AG04449 (cell line): ENCODE measurements at regions of chr3 and their contacts with region 1.

Region 1: DNA sequence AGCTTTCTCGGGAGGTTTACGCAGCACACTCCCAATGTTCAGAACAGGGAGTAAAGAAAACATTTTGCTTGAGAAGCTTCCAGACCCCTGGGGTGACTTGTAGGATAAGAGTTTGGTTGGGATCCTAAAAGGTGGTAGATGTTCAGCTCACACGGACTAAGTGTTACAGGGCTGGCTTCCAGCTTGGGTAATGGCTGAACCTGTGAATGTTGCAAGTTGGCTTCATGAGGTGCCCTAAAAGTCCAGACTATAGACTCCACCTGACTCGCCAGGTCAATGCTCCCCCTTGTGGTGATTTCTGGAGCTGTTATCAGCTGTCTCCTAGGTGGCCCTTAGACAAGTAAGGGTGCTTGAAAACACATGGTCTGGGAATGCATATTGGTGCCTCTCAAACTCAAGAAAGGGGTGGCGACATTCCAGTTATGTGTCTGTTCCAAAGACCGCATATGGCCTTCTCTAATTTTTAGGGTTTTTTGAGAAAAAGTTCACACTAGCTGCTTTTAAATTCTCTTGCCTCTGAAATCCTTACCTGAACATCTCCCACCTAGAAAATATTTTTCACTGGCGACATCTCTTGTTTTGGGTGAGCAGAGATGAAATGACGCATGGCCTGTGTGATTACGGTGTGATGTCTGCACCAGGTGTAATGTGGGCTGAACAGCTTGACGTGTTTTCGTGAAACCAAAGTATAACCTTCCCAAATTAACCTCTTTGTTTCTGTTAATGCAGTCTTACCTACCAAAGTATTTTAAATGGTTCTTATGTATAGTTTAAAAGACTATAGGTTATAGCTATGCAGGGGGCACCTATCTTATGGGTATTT is 175.7 kb upstream of the KBTBD8 start:
- DNase-seq: no peak
- H3K4me3 ChIP-seq: no peak overlapping the region
- CTCF ChIP-seq: peak; percentile 77

Region 2: GRCh38 chr3:66261355-66261754 is 561.0 kb before region 1 on chr3:
- CTCF ChIA-PET with region 1: interaction called, 223 read pairs
- POLR2A ChIA-PET with region 1: no interaction called
- DNase-seq: no peak
- H3K4me3 ChIP-seq: no peak overlapping the region
- CTCF ChIP-seq: no peak

Region 3: GRCh38 chr3:66276705-66277274 is 545.6 kb before region 1 on chr3:
- CTCF ChIA-PET with region 1: interaction called, 129 read pairs
- POLR2A ChIA-PET with region 1: no interaction called
- DNase-seq: no peak
- H3K4me3 ChIP-seq: no peak overlapping the region
- CTCF ChIP-seq: peak; percentile 45

Region 4: GRCh38 chr3:66394019-66394752 is 428.2 kb before region 1 on chr3:
- CTCF ChIA-PET with region 1: interaction called, 23 read pairs
- POLR2A ChIA-PET with region 1: no interaction called
- DNase-seq: no peak
- H3K4me3 ChIP-seq: no peak overlapping the region
- CTCF ChIP-seq: no peak

Region 5: GRCh38 chr3:66544619-66545429 is 277.6 kb before region 1 on chr3:
- CTCF ChIA-PET with region 1: interaction called, 12 read pairs
- POLR2A ChIA-PET with region 1: no interaction called
- DNase-seq: no peak
- H3K4me3 ChIP-seq: no peak overlapping the region
- CTCF ChIP-seq: no peak

Region 6: GRCh38 chr3:66836363-66837152 is 14.2 kb after region 1 on chr3:
- CTCF ChIA-PET with region 1: interaction called, 17 read pairs
- POLR2A ChIA-PET with region 1: no interaction called
- DNase-seq: no peak
- H3K4me3 ChIP-seq: no peak overlapping the region
- CTCF ChIP-seq: no peak